ENCODE measurements at regions of chr11 and their contacts with region 1.

Region 1: GRCh38 chr11:46582588-46582987 is 11.2 kb downstream of the AMBRA1 start:
- DNase-seq: no peak
- H3K4me3 ChIP-seq: no peak overlapping the region
- H3K27ac ChIP-seq: no peak overlapping the region
- H3K4me1 ChIP-seq: no peaks in the 10 kb centered on the region
- CTCF ChIP-seq: no peak

Region 2: GRCh38 chr11:45949992-45950407 is 632.6 kb before region 1 on chr11:
- CTCF ChIA-PET with region 1: no interaction called
- POLR2A ChIA-PET with region 1: interaction called, 10 read pairs
- intact Hi-C with region 1: no loop called
- DNase-seq: no peak
- H3K4me3 ChIP-seq: no peak overlapping the region
- H3K27ac ChIP-seq: no peak overlapping the region
- H3K4me1 ChIP-seq: peaks cover 6% of the 10 kb centered on the region
- CTCF ChIP-seq: no peak

Measured in OCI-LY7 (cell line).